H1 (cell line): ENCODE measurements at regions of chr2 and their contacts with region 1.

Region 1: DNA sequence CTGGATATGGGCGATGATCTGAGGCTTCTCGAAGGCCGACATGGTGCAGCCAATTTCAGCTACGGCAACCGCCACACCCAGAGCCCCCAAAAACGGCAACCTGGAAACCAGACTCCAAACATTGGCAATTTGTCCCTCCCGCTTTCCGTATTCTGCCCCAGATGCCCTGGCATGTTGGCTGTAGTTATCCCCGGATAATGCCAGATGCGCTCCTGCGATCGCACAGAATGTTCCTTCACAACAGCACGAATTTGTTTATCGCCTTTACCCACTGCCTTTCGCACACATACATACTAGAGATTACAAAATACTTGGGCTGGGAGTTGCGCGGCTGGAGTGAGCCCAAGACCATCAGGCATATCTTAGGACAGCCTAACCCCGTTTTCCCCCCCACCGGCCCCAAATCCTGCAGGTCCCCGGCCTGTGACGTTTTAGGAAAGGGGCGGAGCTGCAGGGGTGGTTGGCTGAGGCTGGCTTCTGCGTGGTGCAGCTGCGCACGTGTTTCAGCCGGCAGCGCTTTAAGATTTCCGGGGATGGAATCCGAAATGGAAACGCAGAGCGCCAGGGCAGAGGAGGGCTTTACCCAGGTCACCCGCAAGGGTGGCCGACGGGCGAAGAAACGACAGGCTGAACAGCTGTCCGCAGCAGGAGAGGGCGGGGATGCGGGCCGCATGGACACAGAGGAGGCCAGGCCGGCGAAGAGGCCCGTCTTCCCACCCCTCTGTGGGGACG is at the start of gene PNO1:
- DNase-seq: peak; percentile 86 to 96
- H3K4me3 ChIP-seq: peak within 1 kb of the TSS; percentile 91 to 99 (median 95)
- H3K27ac ChIP-seq: peak within 1 kb of the TSS; percentile 100
- H3K4me1 ChIP-seq: peaks cover 0 to 2% (median 1%) of the 10 kb centered on the region in 4 experiments; a peak in 2 of 7 replicates
- H3K27me3 ChIP-seq: no peaks in the 10 kb centered on the region
- CTCF ChIP-seq: no peak
- EP300 ChIP-seq: 0 out of 3 replicates have a peak, but pooled peaks of 1 of the 2 experiments have one; percentile 3
- POLR2A ChIP-seq: peak; percentile 70 to 75
- RAD21 ChIP-seq: no peak
- total RNA-seq, gene PNO1: 33.2 and 34.7 TPM in 2 replicates

Region 2: GRCh38 chr2:68031542-68032160 is 125.9 kb before region 1 on chr2:
- CTCF ChIA-PET with region 1: no interaction called
- POLR2A ChIA-PET with region 1: no interaction called
- DNase-seq: no peak
- H3K4me3 ChIP-seq: no peak overlapping the region
- H3K27ac ChIP-seq: no peak overlapping the region
- H3K4me1 ChIP-seq: no peaks in the 10 kb centered on the region
- H3K27me3 ChIP-seq: no peaks in the 10 kb centered on the region
- CTCF ChIP-seq: peak in 2 of 3 experiments; percentile 27 to 49; a peak in 2 of 4 replicates
- EP300 ChIP-seq: no peak
- POLR2A ChIP-seq: no peak
- RAD21 ChIP-seq: peak; percentile 86 to 90

Region 3: DNA sequence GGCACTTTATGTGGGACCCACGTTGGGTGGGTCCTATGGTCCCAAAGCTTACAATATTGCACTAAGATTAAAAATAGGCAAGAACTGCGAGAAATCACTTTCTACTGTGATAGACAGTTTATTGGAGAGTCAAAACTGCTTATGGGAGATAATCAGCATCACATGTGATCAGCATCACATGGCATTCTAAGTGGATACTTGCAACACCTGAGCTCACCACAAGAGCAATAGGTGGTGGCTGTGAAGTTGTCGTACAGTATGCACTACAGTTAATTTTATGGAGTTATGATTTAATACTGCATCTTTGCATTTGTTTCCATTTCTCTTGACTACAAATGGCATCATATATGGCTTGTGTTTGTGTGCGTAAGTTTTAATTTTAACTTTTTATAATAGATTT is 11.7 kb after region 1 on chr2:
- CTCF ChIA-PET with region 1: interaction called, 10 read pairs
- POLR2A ChIA-PET with region 1: interaction called, 57 read pairs
- DNase-seq: no peak
- H3K4me3 ChIP-seq: no peak overlapping the region
- H3K27ac ChIP-seq: no peak overlapping the region
- H3K4me1 ChIP-seq: no peaks in the 10 kb centered on the region
- H3K27me3 ChIP-seq: no peaks in the 10 kb centered on the region
- CTCF ChIP-seq: peak in 1 of 3 experiments; percentile 25; a peak in 1 of 4 replicates
- EP300 ChIP-seq: no peak
- POLR2A ChIP-seq: no peak
- RAD21 ChIP-seq: no peak

Region 4: GRCh38 chr2:68176657-68177056 is 19.1 kb after region 1 on chr2:
- CTCF ChIA-PET with region 1: interaction called, 3 read pairs
- POLR2A ChIA-PET with region 1: interaction called, 57 read pairs
- DNase-seq: no peak
- H3K4me3 ChIP-seq: no peak overlapping the region
- H3K27ac ChIP-seq: no peak overlapping the region
- H3K4me1 ChIP-seq: no peaks in the 10 kb centered on the region; a peak in 1 of 7 replicates
- H3K27me3 ChIP-seq: no peaks in the 10 kb centered on the region
- CTCF ChIP-seq: no peak
- EP300 ChIP-seq: no peak
- POLR2A ChIP-seq: no peak
- RAD21 ChIP-seq: no peak

Region 5: GRCh38 chr2:68251187-68251854 is 93.8 kb after region 1 on chr2:
- CTCF ChIA-PET with region 1: interaction called, 4 read pairs
- POLR2A ChIA-PET with region 1: interaction called, 15 read pairs
- DNase-seq: peak; percentile 25 to 65
- H3K4me3 ChIP-seq: peak overlapping the region; percentile 91 to 95 (median 94)
- H3K27ac ChIP-seq: peak overlapping the region; percentile 54; the same call in 1 of the 2 replicates
- H3K4me1 ChIP-seq: peaks cover 2 to 13% (median 4%) of the 10 kb centered on the region in 4 experiments; a peak in 5 of 7 replicates
- H3K27me3 ChIP-seq: no peaks in the 10 kb centered on the region
- CTCF ChIP-seq: peak; percentile 43 to 68 (median 62); a peak in 3 of 4 replicates
- EP300 ChIP-seq: no peak
- POLR2A ChIP-seq: no peak
- RAD21 ChIP-seq: peak; percentile 26 to 52; a peak in 3 of 4 replicates